Activated CD8-positive, alpha-beta T cell treated with anti-CD3 and anti-CD28 coated beads for 36 hours (primary cell): ENCODE measurements at regions of chr2 and their contacts with region 1.

Region 1: DNA sequence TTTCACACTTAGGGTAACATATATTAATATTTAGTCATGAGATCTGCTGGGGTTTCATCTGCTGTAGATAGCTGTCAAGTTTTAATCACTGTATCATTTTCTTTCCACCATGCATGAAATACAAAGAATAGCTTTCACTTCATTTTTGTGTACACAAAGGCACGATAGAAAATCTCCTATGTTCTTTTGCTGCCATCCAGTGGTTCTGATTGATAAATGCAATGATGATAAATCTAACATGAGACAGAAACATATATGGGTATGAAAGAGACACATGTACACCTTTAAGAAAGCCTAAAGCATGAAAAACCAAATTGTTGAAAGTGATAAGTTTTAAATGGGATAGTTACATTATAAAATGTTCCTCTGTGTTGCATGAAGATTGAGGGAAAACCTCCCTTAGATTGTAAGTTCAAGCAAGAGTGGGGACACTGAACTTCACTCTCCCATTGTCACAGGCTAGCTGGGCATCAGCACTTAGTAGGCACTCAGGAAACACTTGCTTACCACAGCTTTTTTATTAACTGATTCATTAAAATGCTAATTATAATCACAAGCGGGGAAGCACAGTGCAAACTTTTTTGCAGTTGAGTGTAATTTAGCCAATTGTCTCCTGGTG is 31.2 kb downstream of the C1D start:
- DNase-seq: no peak
- ATAC-seq: no peak
- H3K4me3 Mint-ChIP-seq: no peak overlapping the region
- H3K27ac Mint-ChIP-seq: no peak overlapping the region
- H3K4me1 Mint-ChIP-seq: no peaks in the 10 kb centered on the region
- H3K27me3 Mint-ChIP-seq: peaks cover 7% of the 10 kb centered on the region
- CTCF ChIP-seq: peak; percentile 85

Region 2: GRCh38 chr2:66434679-66435548 is 1596.7 kb before region 1 on chr2 and contains the start of gene MEIS1:
- CTCF ChIA-PET with region 1: interaction called, 3 read pairs
- POLR2A ChIA-PET with region 1: no interaction called
- intact Hi-C with region 1: loop called (anchors 10 kb)
- DNase-seq: peak; percentile 55
- ATAC-seq: peak; percentile 64
- H3K4me3 Mint-ChIP-seq: peak within 1 kb of the TSS; percentile 59
- H3K27ac Mint-ChIP-seq: no peak within 1 kb of the TSS
- H3K4me1 Mint-ChIP-seq: peaks cover 21% of the 10 kb centered on the region
- H3K27me3 Mint-ChIP-seq: peaks cover 77% of the 10 kb centered on the region
- CTCF ChIP-seq: no peak
- total RNA-seq, gene MEIS1: not detected

Region 3: DNA sequence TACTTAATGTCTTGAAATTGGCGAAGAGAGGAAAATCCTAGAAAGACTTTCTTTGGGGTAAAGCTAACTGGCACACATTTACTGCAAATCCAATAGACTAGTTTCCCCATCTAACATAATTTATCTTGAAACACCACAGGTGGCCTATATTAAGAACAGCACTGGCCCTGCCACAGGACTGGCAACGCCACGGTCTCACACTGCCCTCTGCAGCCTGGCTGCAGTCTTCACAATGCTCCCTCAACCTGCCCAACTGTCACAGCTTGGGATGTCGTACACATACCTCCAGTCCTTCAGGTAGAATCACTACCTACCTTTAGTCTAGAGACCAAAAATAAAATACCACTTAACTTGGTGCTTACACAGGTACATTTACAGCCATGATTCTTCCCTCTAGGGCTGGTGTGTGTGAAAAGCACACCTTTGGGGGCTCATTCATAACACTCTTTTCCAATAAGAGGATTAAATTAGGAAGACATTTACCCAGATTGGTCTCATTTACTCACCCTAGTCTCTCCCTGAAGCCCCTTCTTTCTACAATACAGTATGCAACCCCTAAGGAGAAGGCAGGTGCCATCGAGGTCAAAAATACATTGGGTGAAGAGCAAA is 191.1 kb before region 1 on chr2:
- CTCF ChIA-PET with region 1: no interaction called
- POLR2A ChIA-PET with region 1: no interaction called
- intact Hi-C with region 1: loop called (anchors 10 kb)
- DNase-seq: peak; percentile 43
- ATAC-seq: no peak
- H3K4me3 Mint-ChIP-seq: no peak overlapping the region
- H3K27ac Mint-ChIP-seq: no peak overlapping the region
- H3K4me1 Mint-ChIP-seq: no peaks in the 10 kb centered on the region
- H3K27me3 Mint-ChIP-seq: peaks cover 8% of the 10 kb centered on the region
- CTCF ChIP-seq: peak; percentile 59

Region 4: GRCh38 chr2:67888351-67889005 is 143.2 kb before region 1 on chr2:
- CTCF ChIA-PET with region 1: no interaction called
- POLR2A ChIA-PET with region 1: no interaction called
- intact Hi-C with region 1: no loop called
- DNase-seq: no peak
- ATAC-seq: no peak
- H3K4me3 Mint-ChIP-seq: no peak overlapping the region
- H3K27ac Mint-ChIP-seq: no peak overlapping the region
- H3K4me1 Mint-ChIP-seq: no peaks in the 10 kb centered on the region
- H3K27me3 Mint-ChIP-seq: no peaks in the 10 kb centered on the region
- CTCF ChIP-seq: no peak

Region 5: DNA sequence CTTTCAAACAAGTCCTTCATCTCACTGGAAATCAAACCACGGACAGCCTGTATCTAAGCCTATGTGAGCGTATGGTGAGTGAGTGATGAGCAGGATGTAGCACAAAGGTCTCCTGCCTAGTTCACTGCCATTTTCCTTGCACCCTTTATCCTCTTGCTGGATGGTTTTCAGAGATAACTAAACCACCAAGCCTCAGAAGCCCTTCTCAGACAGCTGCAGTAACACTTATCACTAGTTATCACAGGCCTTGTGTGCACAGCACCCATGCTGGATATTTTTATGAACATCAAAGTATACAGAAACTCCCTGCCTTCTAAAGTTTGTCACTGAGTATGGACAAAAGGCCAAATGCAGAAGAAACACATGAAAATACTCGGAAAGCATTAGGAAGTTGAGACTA is 38.3 kb before region 1 on chr2:
- CTCF ChIA-PET with region 1: no interaction called
- POLR2A ChIA-PET with region 1: no interaction called
- intact Hi-C with region 1: no loop called
- DNase-seq: no peak
- ATAC-seq: no peak
- H3K4me3 Mint-ChIP-seq: no peak overlapping the region
- H3K27ac Mint-ChIP-seq: no peak overlapping the region
- H3K4me1 Mint-ChIP-seq: no peaks in the 10 kb centered on the region
- H3K27me3 Mint-ChIP-seq: peaks cover 7% of the 10 kb centered on the region
- CTCF ChIP-seq: no peak